ENCODE measurements at regions of chr2 and their contacts with region 1.

Region 1: DNA sequence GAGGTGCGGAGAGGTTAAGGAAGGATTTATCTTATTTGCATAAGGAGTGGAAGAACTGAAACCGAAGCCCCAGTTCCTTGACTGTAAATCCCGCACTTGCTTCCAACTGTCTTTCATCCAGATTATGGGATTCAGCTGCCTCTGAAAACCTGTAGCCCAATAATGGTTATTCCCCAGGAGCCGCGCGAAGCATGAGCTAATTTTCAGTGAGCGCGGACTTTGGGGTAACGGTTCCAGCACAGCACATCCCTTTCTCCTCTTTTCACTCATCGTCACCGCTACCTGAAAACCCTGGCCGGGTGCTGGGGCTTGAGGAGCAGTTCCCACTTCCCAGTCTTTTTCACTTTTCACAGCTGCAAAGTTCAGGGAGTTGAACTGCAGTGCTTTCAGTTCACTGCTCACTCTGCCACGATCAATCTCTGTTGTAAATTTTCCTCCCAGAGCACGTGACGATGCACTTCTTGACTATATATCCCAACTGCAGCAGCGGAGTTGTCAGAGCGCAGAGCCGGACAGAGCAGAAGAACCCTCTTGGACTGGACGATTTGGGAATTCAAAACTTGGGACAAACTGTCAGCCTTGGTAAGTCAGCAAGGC is at the start of gene KCNE4:
- DNase-seq: peak; percentile 60 to 82
- H3K4me3 ChIP-seq: peak within 1 kb of the TSS; percentile 73 to 75
- H3K27ac ChIP-seq: peak within 1 kb of the TSS; percentile 92 to 94
- H3K4me1 ChIP-seq: peaks cover 0 to 47% (median 25%) of the 10 kb centered on the region in 4 donors
- H3K27me3 ChIP-seq: no peaks in the 10 kb centered on the region
- CTCF ChIP-seq: no peak

Region 2: GRCh38 chr2:222993920-222994650 is 57.7 kb before region 1 on chr2:
- intact Hi-C with region 1: loop called (anchors 2 kb)
- DNase-seq: peak; percentile 93 to 96
- H3K4me3 ChIP-seq: peak overlapping the region; percentile 27 to 30
- H3K27ac ChIP-seq: peak overlapping the region; percentile 77 to 83
- H3K4me1 ChIP-seq: peaks cover 0 to 30% (median 16%) of the 10 kb centered on the region in 4 donors
- H3K27me3 ChIP-seq: no peaks in the 10 kb centered on the region
- CTCF ChIP-seq: peak in 1 of 2 experiments; percentile 21

Region 3: GRCh38 chr2:223465793-223466192 is 414.0 kb after region 1 on chr2:
- intact Hi-C with region 1: loop called (anchors 5 kb)
- DNase-seq: peak; percentile 92 to 96
- H3K4me3 ChIP-seq: no peak overlapping the region
- H3K27ac ChIP-seq: peak overlapping the region; percentile 39 to 63
- H3K4me1 ChIP-seq: peaks cover 5 to 52% (median 16%) of the 10 kb centered on the region in 4 donors
- H3K27me3 ChIP-seq: no peaks in the 10 kb centered on the region
- CTCF ChIP-seq: no peak